Panc1 (cell line): ENCODE measurements at regions of chr16 and their contacts with region 1.

Region 1: GRCh38 chr16:4538350-4539235 is at the start of gene CDIP1:
- DNase-seq: peak; percentile 88
- ATAC-seq: peak; percentile 97
- H3K4me3 ChIP-seq: peak within 1 kb of the TSS; percentile 66 to 72
- H3K27ac ChIP-seq: peak within 1 kb of the TSS; percentile 86
- H3K4me1 ChIP-seq: peaks cover 5% of the 10 kb centered on the region; the same call in 1 of the 2 replicates
- H3K27me3 ChIP-seq: no peaks in the 10 kb centered on the region
- CTCF ChIP-seq: no peak
- total RNA-seq, gene CDIP1: 26.8 TPM

Region 2: DNA sequence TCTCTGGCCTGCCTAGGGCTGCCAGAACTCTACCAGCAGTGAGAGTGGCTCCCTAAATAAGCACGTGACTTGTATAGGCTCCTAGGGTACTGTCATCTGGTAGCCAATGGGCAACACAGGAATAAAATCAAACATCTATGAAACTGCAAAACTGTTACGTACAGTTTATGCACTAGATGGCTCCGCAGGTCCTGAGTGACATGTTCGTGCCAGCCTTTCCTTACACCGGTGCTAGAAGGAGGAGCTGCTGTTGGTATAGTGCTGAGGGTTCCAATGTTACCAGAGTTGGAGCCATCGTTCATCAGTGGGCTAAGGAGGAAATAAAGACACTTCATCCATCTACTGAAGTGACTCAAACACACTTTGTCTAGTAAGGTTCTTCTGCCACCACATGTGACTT is 758.0 kb before region 1 on chr16:
- CTCF ChIA-PET with region 1: no interaction called
- POLR2A ChIA-PET with region 1: interaction called, 11 read pairs
- in situ Hi-C with region 1: no loop called
- intact Hi-C with region 1: no loop called
- DNase-seq: no peak
- ATAC-seq: peak; percentile 75
- H3K4me3 ChIP-seq: no peak overlapping the region
- H3K27ac ChIP-seq: no peak overlapping the region
- H3K4me1 ChIP-seq: no peaks in the 10 kb centered on the region
- H3K27me3 ChIP-seq: no peaks in the 10 kb centered on the region
- CTCF ChIP-seq: no peak; the same call in 1 of the 2 replicates